ENCODE measurements at regions of chr6 and their contacts with region 1.

Region 1: GRCh38 chr6:135147637-135148592 is 33.2 kb upstream of the MYB start:
- DNase-seq: no peak
- H3K4me3 ChIP-seq: no peak overlapping the region
- H3K27ac ChIP-seq: no peak overlapping the region
- H3K4me1 ChIP-seq: no peaks in the 10 kb centered on the region
- H3K27me3 ChIP-seq: no peaks in the 10 kb centered on the region
- CTCF ChIP-seq: no peak

Region 2: DNA sequence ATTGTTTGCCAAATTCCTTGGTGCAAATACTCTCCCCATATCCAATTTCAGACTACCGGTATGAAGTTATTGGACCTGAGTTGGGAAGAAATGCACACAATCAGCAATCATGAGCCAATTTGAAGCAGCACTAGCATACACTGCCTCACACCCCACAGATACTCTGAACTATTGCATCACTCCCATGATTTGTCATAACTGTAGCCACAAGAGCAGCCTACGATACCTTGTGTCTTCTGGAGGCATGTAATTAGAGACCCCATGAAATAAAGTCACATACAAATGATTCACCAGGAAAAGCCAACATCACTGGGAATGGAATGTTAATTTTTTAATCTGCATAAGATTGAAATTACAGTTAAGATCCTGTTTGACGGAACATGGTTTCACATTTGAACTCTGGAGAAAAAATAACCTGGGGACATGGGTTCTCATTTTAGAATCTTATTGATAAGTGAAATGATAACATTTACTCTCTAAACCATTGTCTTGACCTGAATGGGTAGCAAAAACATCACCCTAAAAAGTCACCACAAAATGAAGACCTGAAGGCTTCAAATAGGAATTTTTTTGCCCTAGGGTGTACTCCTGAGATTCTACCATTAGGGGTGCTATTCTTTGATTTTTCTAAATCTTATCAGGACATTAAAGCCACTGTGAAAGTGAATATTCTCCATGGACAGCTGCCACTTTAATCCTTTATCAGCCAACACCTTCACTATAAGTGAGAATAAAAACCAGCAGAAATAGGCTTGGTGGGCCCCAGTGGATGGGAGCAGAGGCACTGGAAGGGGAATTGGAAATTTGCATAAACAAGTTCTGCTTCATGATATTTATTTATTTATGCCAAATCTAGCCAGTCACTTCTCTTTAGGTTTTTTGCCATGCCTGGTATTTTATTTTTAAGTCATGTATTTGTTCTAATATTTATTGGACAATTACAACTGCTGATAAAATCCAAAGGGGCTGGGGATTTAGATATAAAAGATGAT is 58.8 kb before region 1 on chr6:
- intact Hi-C with region 1: no loop called
- DNase-seq: no peak
- H3K4me3 ChIP-seq: no peak overlapping the region
- H3K27ac ChIP-seq: no peak overlapping the region
- H3K4me1 ChIP-seq: no peaks in the 10 kb centered on the region
- H3K27me3 ChIP-seq: no peaks in the 10 kb centered on the region
- CTCF ChIP-seq: peak; percentile 33

Region 3: GRCh38 chr6:135280375-135281136 is 132.6 kb after region 1 on chr6:
- intact Hi-C with region 1: no loop called
- DNase-seq: no peak
- H3K4me3 ChIP-seq: no peak overlapping the region
- H3K27ac ChIP-seq: no peak overlapping the region
- H3K4me1 ChIP-seq: no peaks in the 10 kb centered on the region
- H3K27me3 ChIP-seq: no peaks in the 10 kb centered on the region
- CTCF ChIP-seq: no peak

Region 4: GRCh38 chr6:135434095-135434494 is 286.2 kb after region 1 on chr6:
- intact Hi-C with region 1: loop called (anchors 2 kb)
- DNase-seq: no peak
- H3K4me3 ChIP-seq: no peak overlapping the region
- H3K27ac ChIP-seq: no peak overlapping the region
- H3K4me1 ChIP-seq: no peaks in the 10 kb centered on the region
- H3K27me3 ChIP-seq: no peaks in the 10 kb centered on the region
- CTCF ChIP-seq: no peak